Left colon (tissue), 2 donors: ENCODE measurements at regions of chr6 and their contacts with region 1.

Region 1: DNA sequence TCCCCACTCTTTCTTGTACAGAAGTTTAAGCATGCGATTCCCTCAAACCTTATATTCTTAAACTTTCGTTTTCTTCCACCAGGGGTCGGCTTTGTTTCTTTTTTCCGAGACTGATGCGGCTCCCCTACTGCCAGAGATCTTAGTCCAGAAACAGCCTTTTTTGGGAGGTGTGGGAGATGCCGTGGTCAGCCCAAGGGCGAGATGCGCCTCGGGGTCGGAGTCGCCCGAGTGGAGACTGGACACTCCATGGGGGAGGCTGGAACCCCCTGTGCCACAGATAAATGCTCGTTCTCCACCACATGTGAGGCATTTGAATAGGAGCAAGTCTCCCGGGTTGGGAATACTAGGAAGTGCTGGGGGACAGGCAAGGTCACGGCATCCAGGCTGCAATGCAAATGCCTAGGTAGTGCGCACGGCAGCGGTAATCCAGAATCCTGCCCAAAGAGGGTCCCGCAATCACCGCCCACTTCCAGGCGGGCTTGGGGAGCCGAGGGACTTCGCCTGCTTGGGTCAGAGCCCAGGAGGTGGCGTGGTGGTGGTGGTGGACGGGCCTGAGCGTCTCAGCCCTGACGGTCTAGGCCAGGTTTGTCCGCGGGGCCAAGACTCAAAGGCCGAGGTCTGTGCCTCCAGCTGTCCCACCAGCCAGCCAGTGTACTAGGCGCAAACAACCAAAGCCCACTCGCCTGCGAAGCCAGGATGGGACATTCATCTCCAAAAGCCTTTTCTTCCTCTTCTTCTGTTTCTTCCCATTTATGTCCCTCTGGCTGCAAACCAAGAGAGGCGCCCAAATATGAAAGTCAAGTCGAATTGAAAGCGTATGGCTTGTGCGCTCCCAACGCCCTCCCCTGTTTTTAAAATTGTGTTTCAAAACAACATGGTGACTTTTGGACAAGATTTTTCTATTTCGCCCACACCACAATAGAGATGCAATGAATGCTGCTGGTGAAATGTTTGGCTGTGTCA is 39.3 kb upstream of the OSTM1 start:
- DNase-seq: peak in 1 of 2 donors; percentile 13
- ATAC-seq: peak; percentile 40

Region 2: GRCh38 chr6:107634324-107635056 is 479.3 kb before region 1 on chr6:
- intact Hi-C with region 1: no loop called
- DNase-seq: no peak
- ATAC-seq: no peak

Region 3: DNA sequence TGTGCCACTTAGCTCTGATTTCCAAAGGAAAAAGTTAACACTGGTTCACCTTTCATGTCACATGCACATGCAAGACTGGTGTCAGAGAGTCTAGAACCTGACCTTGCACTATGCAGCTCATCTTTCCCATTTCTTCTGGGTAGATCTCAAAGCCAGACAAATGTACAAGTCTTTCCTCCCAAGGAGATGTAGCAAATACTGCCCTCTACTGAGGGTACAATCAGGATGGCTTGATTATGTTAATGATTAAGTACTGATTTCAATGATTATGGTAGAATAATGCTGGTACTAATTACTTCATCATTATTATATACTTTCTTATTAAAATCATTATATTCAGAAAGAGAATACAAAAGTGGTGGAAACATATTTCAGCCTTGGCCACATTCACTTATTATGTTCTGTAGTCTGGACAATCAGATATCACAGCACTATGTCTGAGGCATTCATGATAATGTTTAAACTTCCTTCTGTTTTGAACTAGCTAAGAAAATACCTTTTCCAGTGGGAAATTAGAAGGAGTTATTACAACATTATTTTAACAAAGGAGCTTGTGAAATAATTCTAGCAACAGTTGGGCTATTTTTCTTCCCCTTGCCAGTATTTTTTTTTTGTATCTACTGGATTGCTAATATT is 378.4 kb after region 1 on chr6:
- intact Hi-C with region 1: loop called in 1 of 2 experiments (anchors 10 kb)
- DNase-seq: no peak
- ATAC-seq: peak; percentile 62

Region 4: DNA sequence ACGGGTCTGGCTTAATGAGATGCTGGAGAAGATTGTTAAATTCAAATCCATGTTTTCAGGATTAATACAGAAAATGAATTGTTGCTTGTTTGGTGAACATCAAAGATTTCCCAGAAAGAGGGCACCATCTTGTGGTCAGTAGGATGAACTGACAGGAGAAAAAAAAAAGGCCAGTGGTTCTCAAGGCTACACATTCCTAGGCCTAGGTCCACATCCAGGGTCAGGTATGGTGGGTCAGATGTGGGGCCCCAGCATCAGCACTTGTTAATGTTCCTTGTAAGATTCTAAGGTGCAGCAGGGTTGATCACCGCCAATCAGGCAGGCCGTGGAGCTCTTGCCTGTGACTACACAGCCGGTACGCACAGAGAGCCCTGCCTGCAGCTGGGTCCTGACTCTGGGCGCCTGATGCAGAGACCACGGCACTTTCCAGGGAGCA is 412.9 kb after region 1 on chr6:
- intact Hi-C with region 1: loop called in 1 of 2 experiments (anchors 5 kb)
- DNase-seq: no peak
- ATAC-seq: peak; percentile 49